AG04449 (cell line): ENCODE measurements at regions of chr12 and their contacts with region 1.

Region 1: DNA sequence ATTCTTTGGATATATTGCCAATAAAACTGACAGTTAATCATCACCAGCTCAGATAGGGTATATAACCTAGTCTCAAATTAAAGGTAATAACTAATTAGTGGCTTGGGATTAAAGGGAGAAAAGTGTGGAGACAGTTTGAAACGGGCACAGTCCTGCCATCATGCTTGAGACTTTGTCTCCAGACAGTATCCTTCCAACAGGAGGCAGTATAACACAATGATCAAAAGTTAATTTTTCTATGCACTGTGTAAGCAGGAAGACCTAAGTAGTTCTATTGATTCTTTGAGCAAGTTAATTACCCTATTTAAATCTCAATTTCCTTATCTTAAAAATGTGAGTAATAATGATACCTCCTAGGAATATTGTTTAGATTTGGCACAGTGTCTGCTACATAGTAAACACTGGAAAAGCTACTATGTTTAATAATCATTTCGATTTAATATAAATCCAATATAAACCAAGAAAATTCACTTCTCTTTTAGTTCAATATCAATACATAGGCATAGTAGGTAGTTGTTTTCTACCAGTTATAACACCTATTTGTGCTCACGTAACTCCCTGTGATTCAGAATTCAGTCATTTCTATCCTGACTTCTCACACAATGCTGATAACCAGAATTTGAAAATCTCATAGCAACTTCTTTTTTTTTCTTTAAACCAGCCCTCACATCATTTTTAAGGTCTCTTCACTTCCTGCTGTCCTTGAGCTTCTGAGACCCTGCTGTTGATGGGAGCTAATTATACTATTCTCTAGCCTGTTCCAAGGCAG is 53.7 kb downstream of the GALNT4 start:
- DNase-seq: no peak
- H3K4me3 ChIP-seq: no peak overlapping the region
- CTCF ChIP-seq: peak; percentile 51

Region 2: DNA sequence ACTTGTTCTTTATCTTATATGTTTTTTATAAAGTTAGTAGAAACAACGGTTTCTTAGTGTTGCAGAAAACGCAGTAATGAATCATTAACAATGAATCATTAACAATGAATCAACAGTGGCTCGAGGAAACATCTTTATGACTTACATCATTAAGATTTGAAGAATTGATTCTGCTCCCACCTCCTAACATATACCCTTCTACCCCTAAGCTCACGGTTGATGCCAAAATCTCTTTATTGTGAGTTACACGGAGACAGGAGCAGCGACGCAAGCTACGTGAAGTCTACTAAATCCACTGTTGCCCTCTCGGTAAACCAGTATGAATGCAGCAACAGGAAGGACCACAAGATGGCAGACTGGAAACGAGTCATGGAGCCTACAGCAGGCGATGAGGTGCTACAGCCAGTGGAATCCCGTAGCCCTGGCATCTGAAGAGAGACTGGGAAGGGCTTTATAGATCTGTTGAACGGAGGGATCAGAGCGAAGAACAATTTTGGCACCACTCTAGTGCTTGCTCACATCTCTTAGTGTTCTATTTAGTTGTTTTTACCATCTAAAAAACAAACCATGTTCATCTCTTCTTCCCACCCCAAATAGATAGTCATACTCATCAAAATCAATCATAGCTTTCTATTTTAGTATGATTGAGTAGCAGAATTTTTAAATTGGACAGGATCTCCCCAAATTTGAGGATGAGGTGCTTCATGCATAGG is 451.4 kb before region 1 on chr12:
- CTCF ChIA-PET with region 1: interaction called, 23 read pairs
- POLR2A ChIA-PET with region 1: no interaction called
- DNase-seq: peak; percentile 34
- H3K4me3 ChIP-seq: peak overlapping the region; percentile 52
- CTCF ChIP-seq: peak; percentile 91

Region 3: DNA sequence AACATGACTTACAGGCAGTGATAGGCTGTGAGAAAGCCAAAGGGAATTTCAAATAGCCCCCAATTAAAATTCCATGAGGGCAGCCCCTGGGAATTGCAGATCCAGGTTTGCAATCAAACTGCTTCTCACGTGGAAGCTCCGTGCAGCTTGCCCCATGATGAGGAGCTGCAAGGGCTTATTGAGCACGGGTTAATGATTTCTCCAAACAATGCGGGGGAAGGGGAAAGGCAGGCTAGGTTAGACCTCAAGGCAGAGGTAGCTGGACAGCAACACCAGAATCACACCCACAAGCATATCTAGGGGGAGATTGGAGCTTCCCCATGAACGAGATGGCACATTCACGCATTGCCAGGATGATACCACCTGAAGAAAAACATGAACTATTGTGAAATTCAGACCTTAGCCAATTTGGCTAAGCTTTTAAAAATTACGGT is 113.6 kb before region 1 on chr12:
- CTCF ChIA-PET with region 1: no interaction called
- POLR2A ChIA-PET with region 1: no interaction called
- DNase-seq: no peak
- H3K4me3 ChIP-seq: no peak overlapping the region
- CTCF ChIP-seq: no peak

Region 4: DNA sequence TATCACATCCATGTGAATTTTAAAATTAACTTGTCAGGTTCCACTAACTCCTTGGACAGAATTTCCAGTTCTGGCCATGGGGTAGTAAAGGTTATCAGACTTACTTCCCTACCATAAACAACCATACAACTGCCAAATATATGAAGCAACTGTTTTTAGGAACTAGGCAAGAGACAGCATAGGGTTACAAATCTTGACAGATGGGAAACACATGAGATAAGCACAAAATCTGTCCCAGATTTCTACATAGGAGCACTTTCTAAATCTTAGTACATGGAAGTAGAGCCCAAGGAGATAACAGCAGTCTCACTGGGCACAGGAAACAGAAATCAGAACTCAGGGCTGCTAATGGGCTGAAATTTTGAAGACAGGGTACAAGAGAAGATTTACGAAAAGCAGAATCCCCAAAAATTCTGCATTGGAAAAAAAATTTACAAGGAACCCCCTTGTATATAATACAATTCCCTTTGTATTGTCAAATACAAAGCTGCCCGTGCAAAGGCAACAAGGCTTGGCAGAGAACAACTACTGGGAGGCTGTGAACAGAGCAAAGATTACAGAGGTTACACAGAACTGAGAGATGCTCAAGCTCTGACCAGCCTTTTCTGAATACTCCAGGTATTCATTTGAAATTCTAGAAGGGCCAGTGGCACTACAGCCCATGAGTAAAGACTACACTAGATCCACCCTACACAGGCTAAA is 10.4 kb after region 1 on chr12:
- CTCF ChIA-PET with region 1: interaction called, 21 read pairs
- POLR2A ChIA-PET with region 1: no interaction called
- DNase-seq: no peak
- H3K4me3 ChIP-seq: no peak overlapping the region
- CTCF ChIP-seq: no peak

Region 5: GRCh38 chr12:89494411-89495231 is 23.7 kb after region 1 on chr12:
- CTCF ChIA-PET with region 1: interaction called, 25 read pairs
- POLR2A ChIA-PET with region 1: no interaction called
- DNase-seq: no peak
- H3K4me3 ChIP-seq: no peak overlapping the region
- CTCF ChIP-seq: no peak

Region 6: GRCh38 chr12:89504560-89505346 is 33.8 kb after region 1 on chr12:
- CTCF ChIA-PET with region 1: interaction called, 25 read pairs
- POLR2A ChIA-PET with region 1: no interaction called
- DNase-seq: no peak
- H3K4me3 ChIP-seq: no peak overlapping the region
- CTCF ChIP-seq: no peak

Region 7: GRCh38 chr12:89517720-89518119 is 46.8 kb after region 1 on chr12:
- CTCF ChIA-PET with region 1: interaction called, 258 read pairs
- POLR2A ChIA-PET with region 1: no interaction called
- DNase-seq: no peak
- H3K4me3 ChIP-seq: no peak overlapping the region
- CTCF ChIP-seq: no peak

Region 8: GRCh38 chr12:89524541-89525285 is 53.8 kb after region 1 on chr12 and contains the start of gene GALNT4:
- CTCF ChIA-PET with region 1: interaction called, 258 read pairs
- POLR2A ChIA-PET with region 1: no interaction called
- DNase-seq: peak; percentile 40
- H3K4me3 ChIP-seq: peak within 1 kb of the TSS; percentile 97
- CTCF ChIP-seq: peak; percentile 90

Region 9: GRCh38 chr12:89566630-89567151 is 95.8 kb after region 1 on chr12:
- CTCF ChIA-PET with region 1: no interaction called
- POLR2A ChIA-PET with region 1: no interaction called
- DNase-seq: no peak
- H3K4me3 ChIP-seq: no peak overlapping the region
- CTCF ChIP-seq: no peak